Gastrocnemius medialis (tissue), 4 donors: ENCODE measurements at regions of chr3 and their contacts with region 1.

Region 1: DNA sequence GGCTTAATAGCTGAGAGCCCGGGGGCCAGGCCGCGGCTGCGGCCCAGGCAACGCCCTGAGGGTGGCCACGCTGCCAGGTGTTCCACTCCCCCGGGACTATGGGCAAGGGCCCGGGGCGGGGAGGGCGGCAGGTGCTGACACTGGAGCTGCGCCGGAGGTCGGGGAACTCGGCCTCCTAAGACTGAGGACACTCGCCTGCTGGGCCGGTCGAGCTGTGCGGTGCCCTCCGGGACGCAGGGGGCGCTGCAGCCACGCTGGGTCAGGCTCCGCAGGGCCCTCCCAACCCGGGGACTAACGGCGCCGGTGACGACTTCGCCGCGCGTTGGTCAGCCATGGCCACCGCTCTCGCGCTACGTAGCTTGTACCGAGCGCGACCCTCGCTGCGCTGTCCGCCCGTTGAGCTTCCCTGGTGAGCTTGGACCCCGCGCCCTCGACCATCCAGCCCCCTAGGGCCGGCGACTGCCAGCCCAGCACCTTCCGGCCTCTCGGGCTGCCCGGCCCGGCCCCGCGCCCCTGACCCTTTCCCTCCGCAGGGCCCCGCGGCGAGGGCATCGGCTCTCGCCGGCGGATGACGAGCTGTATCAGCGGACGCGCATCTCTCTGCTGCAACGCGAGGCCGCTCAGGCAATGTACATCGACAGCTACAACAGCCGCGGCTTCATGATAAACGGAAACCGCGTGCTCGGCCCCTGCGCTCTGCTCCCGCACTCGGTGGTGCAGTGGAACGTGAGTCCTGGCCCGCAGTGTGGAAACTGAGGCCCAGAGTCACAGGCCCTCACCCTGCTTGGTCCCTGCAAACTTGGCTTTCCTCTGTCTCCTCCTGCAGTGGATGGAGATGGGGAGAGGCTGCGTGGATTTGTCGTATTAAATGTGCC is at the start of gene NDUFAF3:
- DNase-seq: peak; percentile 91 to 95
- ATAC-seq: peak; percentile 76 to 79
- H3K4me3 ChIP-seq: peak within 1 kb of the TSS; percentile 77 to 97 (median 90)
- H3K27ac ChIP-seq: peak within 1 kb of the TSS; percentile 97 to 100 (median 98)
- H3K4me1 ChIP-seq: peaks cover 42 to 51% of the 10 kb centered on the region in 2 donors
- H3K27me3 ChIP-seq: no peaks in the 10 kb centered on the region
- CTCF ChIP-seq: peak; percentile 96 to 99 (median 99)
- POLR2A ChIP-seq: peak in 1 of 2 donors; percentile 87
- total RNA-seq, gene NDUFAF3: 129 to 181 (median 148) TPM

Region 2: DNA sequence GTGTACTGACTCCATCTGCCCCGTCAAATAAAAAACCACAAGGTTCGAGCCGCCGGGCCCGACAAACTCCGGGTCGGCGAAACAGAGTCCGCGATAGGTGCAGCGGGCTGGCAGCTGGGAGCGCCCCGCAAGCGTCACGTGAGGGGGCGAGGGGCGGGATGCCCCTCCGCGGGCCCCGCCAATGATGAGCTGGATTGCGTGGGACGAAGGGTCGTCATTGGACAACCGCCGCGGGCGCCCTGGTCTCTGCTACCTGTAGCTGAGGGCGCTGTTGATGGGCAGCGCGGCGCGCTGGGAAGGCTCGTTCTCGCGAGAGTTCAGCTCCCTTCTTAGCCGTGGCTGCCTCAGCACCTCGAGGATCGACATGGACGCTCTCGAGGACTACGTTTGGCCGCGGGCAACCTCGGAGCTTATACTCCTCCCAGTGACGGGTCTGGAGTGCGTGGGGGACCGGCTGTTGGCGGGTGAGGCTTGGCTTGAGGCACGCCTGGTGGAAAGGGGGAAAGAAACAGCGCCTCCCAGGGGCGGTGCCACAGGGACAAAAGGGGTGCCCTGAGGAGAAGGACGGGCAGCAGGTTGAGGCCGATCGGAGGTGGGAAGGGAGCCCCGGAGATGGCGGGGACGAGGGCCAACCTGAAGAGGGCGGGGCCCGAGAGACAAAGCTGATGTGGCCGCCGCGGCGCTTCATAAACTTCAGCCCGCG is 14.8 kb before region 1 on chr3 and contains the start of gene WDR6:
- in situ Hi-C with region 1: no loop called
- intact Hi-C with region 1: loop called (anchors 1 kb)
- DNase-seq: peak; percentile 97 to 98
- ATAC-seq: peak; percentile 91 to 94
- H3K4me3 ChIP-seq: peak within 1 kb of the TSS; percentile 85 to 99 (median 97)
- H3K27ac ChIP-seq: peak within 1 kb of the TSS; percentile 95 to 100 (median 99)
- H3K4me1 ChIP-seq: peaks cover 15 to 26% of the 10 kb centered on the region in 2 donors
- H3K27me3 ChIP-seq: no peaks in the 10 kb centered on the region
- CTCF ChIP-seq: peak; percentile 33 to 66 (median 58)
- POLR2A ChIP-seq: peak; percentile 74 to 80
- total RNA-seq, gene WDR6: 40.4 to 50.9 (median 45.5) TPM

Region 3: DNA sequence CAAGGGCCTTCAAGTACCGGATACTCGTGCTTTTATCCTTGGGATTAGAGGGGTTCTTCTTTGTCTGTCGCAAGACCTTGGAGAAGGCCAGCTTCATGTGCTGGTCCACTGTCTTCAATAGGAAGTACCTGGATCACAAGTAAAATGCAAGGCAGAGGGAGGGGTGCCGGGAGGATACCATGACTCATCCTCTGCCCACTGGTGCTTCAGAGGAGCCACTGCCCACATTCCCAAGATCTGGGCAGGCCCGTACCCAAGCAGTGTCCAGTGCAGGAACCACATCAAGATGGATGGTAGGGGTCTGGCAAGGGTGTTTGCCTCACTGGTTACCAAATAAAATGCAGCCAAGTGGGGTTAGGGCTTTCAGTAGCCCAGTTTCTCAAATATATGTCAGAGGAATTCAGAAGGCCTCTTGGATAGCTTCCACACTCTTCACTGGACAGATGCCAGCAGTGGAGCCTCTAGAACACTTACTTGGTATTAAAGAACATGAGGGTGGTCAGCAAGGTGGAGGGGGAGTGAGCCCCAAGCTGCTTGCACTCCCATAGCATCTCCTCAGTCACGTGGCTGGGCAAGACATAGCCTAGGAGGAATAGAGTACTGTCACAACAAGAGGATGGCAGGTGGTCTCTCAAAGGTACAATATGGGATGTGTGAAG is 10.7 kb after region 1 on chr3:
- in situ Hi-C with region 1: no loop called
- intact Hi-C with region 1: no loop called
- DNase-seq: no peak
- ATAC-seq: no peak
- H3K4me3 ChIP-seq: no peak overlapping the region
- H3K27ac ChIP-seq: no peak overlapping the region
- H3K4me1 ChIP-seq: peaks cover 15 to 17% of the 10 kb centered on the region in 2 donors
- H3K27me3 ChIP-seq: no peaks in the 10 kb centered on the region
- CTCF ChIP-seq: no peak
- POLR2A ChIP-seq: no peak

Region 4: GRCh38 chr3:49133226-49133951 is 111.3 kb after region 1 on chr3:
- in situ Hi-C with region 1: no loop called
- intact Hi-C with region 1: loop called (anchors 5 kb)
- DNase-seq: peak; percentile 76 to 83
- ATAC-seq: peak; percentile 85 to 87
- H3K4me3 ChIP-seq: peak overlapping the region; percentile 79 to 100 (median 90)
- H3K27ac ChIP-seq: peak overlapping the region; percentile 90 to 96 (median 94)
- H3K4me1 ChIP-seq: peaks cover 19 to 42% of the 10 kb centered on the region in 2 donors
- H3K27me3 ChIP-seq: no peaks in the 10 kb centered on the region
- CTCF ChIP-seq: peak in 1 of 5 experiments; percentile 20
- POLR2A ChIP-seq: no peak